GM10248 (cell line): ENCODE measurements at regions of chr6 and their contacts with region 1.

Region 1: GRCh38 chr6:38493931-38494547 is 145.7 kb downstream of the BTBD9 start:
- DNase-seq: peak; percentile 30
- CTCF ChIP-seq: peak; percentile 83

Region 2: GRCh38 chr6:38034274-38034914 is 459.6 kb before region 1 on chr6:
- CTCF ChIA-PET with region 1: interaction called, 10 read pairs
- POLR2A ChIA-PET with region 1: no interaction called
- DNase-seq: no peak
- CTCF ChIP-seq: peak; percentile 54

Region 3: DNA sequence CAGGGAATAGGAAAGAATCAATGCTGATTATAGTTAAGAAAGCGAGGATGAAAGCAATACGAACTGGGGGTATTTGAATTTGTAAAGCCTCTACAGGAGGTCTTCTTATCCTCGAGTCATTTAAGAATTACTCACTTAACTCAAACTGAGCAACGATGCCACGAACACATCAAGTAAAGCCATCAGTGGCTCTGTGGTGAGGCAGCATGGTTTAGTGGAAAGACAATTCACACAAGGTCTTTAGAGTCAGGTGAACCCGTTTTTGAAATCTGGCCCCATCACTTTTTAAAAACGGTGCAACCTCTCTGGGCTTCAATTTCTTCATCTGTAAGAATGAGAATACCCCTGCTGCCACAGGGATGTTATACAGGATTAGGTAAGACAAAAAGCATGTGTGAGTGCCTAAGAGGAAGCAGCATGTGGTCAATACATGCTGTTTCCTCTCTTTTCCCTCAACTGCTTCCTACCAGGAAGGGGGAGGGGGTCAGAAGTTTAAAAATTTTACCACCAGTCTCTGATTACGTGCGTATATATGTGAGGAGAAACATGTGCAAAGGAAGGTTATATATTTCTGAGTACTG is 16.3 kb before region 1 on chr6:
- CTCF ChIA-PET with region 1: interaction called, 57 read pairs
- POLR2A ChIA-PET with region 1: no interaction called
- DNase-seq: no peak
- CTCF ChIP-seq: no peak

Region 4: GRCh38 chr6:38483526-38483925 is 10.5 kb before region 1 on chr6:
- CTCF ChIA-PET with region 1: interaction called, 57 read pairs
- POLR2A ChIA-PET with region 1: no interaction called
- DNase-seq: peak; percentile 49
- CTCF ChIP-seq: no peak

Region 5: GRCh38 chr6:38509713-38510112 is 15.7 kb after region 1 on chr6:
- CTCF ChIA-PET with region 1: interaction called, 18 read pairs
- POLR2A ChIA-PET with region 1: no interaction called
- DNase-seq: no peak
- CTCF ChIP-seq: no peak